CD14-positive monocyte (primary cell): ENCODE measurements at regions of chr16 and their contacts with region 1.

Region 1: GRCh38 chr16:68448360-68448970 is at the start of gene SMPD3:
- DNase-seq: peak; percentile 92 to 94 (median 93)
- H3K4me3 ChIP-seq: peak within 1 kb of the TSS; percentile 39 to 82 (median 40)
- H3K4me3 Mint-ChIP-seq: peak within 1 kb of the TSS; percentile 75 to 83
- H3K27ac ChIP-seq: no peak within 1 kb of the TSS
- H3K27ac Mint-ChIP-seq: peak within 1 kb of the TSS; percentile 4 to 91 (median 73)
- H3K4me1 ChIP-seq: peaks cover 20 to 29% of the 10 kb centered on the region in 2 donors
- H3K4me1 Mint-ChIP-seq: peaks cover 25% of the 10 kb centered on the region
- H3K27me3 ChIP-seq: peaks cover 17 to 33% of the 10 kb centered on the region in 2 donors
- H3K27me3 Mint-ChIP-seq: peaks cover 18 to 49% (median 30%) of the 10 kb centered on the region in 3 donors
- CTCF ChIP-seq: no peak
- polyA plus RNA-seq, gene SMPD3: 0.40 to 1.1 (median 0.51) TPM

Region 2: DNA sequence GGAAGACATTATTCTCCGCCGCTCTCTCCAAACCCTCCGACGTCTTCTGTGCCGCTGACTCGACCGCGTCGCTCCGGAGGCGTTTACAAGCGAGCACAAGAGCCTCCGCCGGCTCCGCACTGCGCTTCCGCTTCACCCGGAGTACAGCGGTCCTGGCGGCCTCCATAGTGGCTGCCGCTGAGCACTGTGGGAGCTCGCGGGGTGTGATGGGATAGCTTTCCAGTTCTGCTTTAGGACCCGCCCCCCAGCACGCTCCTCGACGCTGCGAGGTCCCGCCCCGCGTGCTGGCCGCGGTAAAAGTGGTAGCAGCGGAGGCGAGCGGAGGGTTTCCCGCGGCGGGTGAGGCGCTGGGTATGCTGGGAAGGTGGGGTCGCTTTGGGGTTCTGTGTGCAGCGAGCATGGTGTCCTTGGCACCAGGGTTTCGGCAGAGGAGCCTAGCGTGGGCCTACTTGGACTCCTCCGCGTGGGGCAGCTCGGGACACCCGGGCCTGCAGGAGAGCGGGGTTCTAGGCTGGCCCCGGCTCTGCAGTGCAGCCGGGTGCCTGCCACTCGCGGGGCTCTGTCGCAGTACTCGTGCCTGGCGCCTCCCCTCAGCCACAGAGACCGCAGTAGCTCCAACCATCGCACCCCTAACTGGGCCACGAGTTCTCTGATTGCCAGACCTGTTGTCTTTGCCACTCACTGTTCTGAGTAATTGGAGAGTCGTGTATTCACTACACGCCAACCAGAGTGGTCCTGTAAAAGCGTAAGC is 137.5 kb before region 1 on chr16 and contains the starts of genes PRMT7 and SLC7A6OS:
- intact Hi-C with region 1: no loop called
- DNase-seq: peak; percentile 88 to 94 (median 88)
- H3K4me3 ChIP-seq: peak within 1 kb of the TSS; percentile 88 to 97 (median 95)
- H3K4me3 Mint-ChIP-seq: peak within 1 kb of the TSS; percentile 92 to 95
- H3K27ac ChIP-seq: peak within 1 kb of the TSS; percentile 93 to 94
- H3K27ac Mint-ChIP-seq: peak within 1 kb of the TSS; percentile 91 to 96 (median 95)
- H3K4me1 ChIP-seq: peaks cover 23 to 26% of the 10 kb centered on the region in 2 donors
- H3K4me1 Mint-ChIP-seq: peaks cover 19% of the 10 kb centered on the region
- H3K27me3 ChIP-seq: no peaks in the 10 kb centered on the region
- H3K27me3 Mint-ChIP-seq: no peaks in the 10 kb centered on the region
- CTCF ChIP-seq: peak; percentile 19
- polyA plus RNA-seq, gene PRMT7: 15.0 to 41.1 (median 15.2) TPM
- polyA plus RNA-seq, gene SLC7A6OS: 9.3 to 10.5 (median 9.7) TPM

Region 3: DNA sequence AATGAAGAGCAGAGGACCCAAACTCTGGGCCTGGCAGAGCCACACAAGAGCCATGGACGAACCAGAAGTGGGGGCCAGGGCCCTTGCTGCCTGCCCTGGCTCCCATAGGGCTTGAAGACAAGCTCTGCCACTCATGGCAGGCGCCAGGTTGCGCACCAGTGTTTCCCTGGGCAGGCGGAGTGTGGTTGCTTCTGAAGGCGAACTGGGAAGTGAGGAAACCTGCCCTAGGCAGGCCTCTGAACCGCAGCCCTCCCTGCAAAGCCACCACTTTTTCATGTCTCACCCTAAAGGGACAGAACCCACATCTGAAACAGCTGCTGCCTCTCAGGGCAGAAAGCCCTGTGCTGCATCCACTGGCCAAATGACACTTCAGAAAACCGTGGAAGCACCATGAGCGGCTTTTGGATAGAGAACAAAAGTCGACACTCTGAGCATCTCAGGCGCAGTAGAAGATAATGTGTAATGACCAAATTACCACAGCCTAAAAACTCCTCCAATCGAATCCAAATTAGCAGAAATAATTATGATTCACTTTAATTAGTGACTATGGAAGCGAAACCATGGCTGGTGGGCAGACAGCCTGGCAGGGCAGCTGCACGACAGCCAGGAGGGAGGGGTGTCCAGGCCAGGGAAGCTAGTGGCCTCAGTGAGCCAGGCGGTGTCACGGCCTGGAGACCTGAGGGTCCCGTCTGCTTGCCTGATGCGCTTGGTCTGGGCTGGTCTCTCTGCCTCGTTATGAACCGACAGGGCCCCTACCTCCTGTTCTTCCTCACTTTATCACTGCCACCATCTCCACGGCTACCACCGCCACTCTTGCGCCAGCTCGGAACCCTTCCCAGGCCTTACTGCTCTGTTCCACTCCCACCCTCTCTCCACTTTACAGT is 78.5 kb before region 1 on chr16:
- intact Hi-C with region 1: no loop called
- DNase-seq: no peak
- H3K4me3 ChIP-seq: no peak overlapping the region
- H3K4me3 Mint-ChIP-seq: peak overlapping the region in 1 of 2 donors; percentile 26
- H3K27ac ChIP-seq: no peak overlapping the region
- H3K27ac Mint-ChIP-seq: peak overlapping the region in 2 of 7 donors; percentile 37 to 56
- H3K4me1 ChIP-seq: peaks cover 29 to 37% of the 10 kb centered on the region in 2 donors
- H3K4me1 Mint-ChIP-seq: peaks cover 41% of the 10 kb centered on the region
- H3K27me3 ChIP-seq: peaks cover 0 to 4% of the 10 kb centered on the region in 2 donors
- H3K27me3 Mint-ChIP-seq: peaks cover 15 to 27% (median 24%) of the 10 kb centered on the region in 3 donors
- CTCF ChIP-seq: no peak

Region 4: DNA sequence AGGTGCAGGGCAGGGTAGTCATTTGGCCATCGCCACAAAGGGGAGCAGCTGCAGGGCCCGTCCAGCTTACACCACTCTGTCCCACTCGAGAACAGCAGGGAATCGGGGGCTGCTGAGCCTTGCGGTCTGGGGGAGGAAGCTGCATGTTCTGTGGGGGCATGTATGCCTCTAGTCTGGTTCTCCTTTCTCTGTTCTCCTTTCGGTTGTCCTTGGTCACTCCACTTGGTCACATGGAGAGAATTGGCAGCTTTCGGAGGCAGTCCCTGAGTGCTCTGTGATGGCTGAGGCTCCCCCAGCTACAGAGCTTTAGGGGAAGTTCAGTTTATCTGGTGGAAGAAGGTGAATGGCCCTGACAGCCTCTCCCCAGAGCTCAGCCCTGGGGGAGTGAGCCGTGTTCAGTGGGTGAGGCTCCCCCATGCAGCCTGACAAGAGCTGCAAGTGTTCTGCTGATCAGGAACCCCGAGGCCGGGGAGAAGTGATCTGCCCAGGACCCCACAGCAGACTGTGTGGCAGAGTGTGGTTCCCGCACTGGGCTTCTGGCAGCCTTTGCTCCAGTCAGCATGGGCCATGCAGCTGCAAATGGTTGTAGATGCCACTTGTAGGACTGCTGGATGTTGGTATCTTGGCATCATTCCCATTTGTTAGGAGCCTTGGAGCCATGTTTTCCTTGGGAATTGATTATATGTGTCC is 22.1 kb after region 1 on chr16:
- intact Hi-C with region 1: loop called in 1 of 2 experiments (anchors 2 kb)
- DNase-seq: peak; percentile 86 to 91 (median 88)
- H3K4me3 ChIP-seq: peak overlapping the region; percentile 10 to 71 (median 38)
- H3K4me3 Mint-ChIP-seq: peak overlapping the region; percentile 83 to 92
- H3K27ac ChIP-seq: peak overlapping the region; percentile 89 to 91
- H3K27ac Mint-ChIP-seq: peak overlapping the region; percentile 95 to 99 (median 99)
- H3K4me1 ChIP-seq: peaks cover 66 to 67% of the 10 kb centered on the region in 2 donors
- H3K4me1 Mint-ChIP-seq: peaks cover 58% of the 10 kb centered on the region
- H3K27me3 ChIP-seq: no peaks in the 10 kb centered on the region
- H3K27me3 Mint-ChIP-seq: peaks cover 0 to 2% (median 0%) of the 10 kb centered on the region in 3 donors
- CTCF ChIP-seq: no peak

Region 5: DNA sequence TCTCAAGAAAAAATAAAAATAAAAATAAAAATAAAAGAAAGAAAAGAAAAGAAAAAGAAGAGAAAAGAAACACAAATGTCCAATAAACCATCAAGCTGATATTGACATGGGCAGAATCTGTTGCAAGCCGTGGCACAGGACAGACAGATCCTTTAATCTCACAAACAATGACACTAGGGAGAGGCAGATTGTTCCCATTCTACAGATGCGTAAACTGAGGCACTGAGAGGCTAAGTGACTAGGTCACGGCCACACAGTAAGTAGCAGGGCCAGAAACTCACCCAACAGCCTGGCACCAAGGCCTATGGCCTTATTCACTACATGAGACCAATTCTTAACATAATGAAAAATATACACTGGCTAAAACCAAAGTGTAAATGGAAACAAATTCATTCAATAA is 62.3 kb after region 1 on chr16:
- intact Hi-C with region 1: loop called (anchors 2 kb)
- DNase-seq: no peak
- H3K4me3 ChIP-seq: peak overlapping the region in 1 of 3 experiments; percentile 23
- H3K4me3 Mint-ChIP-seq: no peak overlapping the region
- H3K27ac ChIP-seq: no peak overlapping the region
- H3K27ac Mint-ChIP-seq: peak overlapping the region in 1 of 7 donors; percentile 5
- H3K4me1 ChIP-seq: peaks cover 31 to 35% of the 10 kb centered on the region in 2 donors
- H3K4me1 Mint-ChIP-seq: peaks cover 32% of the 10 kb centered on the region
- H3K27me3 ChIP-seq: no peaks in the 10 kb centered on the region
- H3K27me3 Mint-ChIP-seq: peaks cover 9 to 20% (median 19%) of the 10 kb centered on the region in 3 donors
- CTCF ChIP-seq: no peak